ENCODE measurements at regions of chr18 and their contacts with region 1.

Region 1: GRCh38 chr18:72762515-72763122 is 105.2 kb downstream of the NETO1 start:
- DNase-seq: peak; percentile 21
- H3K4me3 ChIP-seq: no peak overlapping the region
- H3K27ac ChIP-seq: no peak overlapping the region
- H3K4me1 ChIP-seq: no peaks in the 10 kb centered on the region
- H3K27me3 ChIP-seq: no peaks in the 10 kb centered on the region
- CTCF ChIP-seq: peak; percentile 68 to 81 (median 73)
- POLR2A ChIP-seq: no peak

Region 2: GRCh38 chr18:72419914-72420313 is 342.7 kb before region 1 on chr18:
- intact Hi-C with region 1: no loop called
- DNase-seq: no peak
- H3K4me3 ChIP-seq: no peak overlapping the region
- H3K27ac ChIP-seq: no peak overlapping the region
- H3K4me1 ChIP-seq: no peaks in the 10 kb centered on the region
- H3K27me3 ChIP-seq: no peaks in the 10 kb centered on the region
- CTCF ChIP-seq: no peak
- POLR2A ChIP-seq: no peak

Region 3: GRCh38 chr18:73842795-73843394 is 1080.3 kb after region 1 on chr18:
- intact Hi-C with region 1: loop called (anchors 5 kb)
- DNase-seq: peak; percentile 35
- H3K4me3 ChIP-seq: no peak overlapping the region
- H3K27ac ChIP-seq: no peak overlapping the region
- H3K4me1 ChIP-seq: no peaks in the 10 kb centered on the region
- H3K27me3 ChIP-seq: no peaks in the 10 kb centered on the region
- CTCF ChIP-seq: peak; percentile 70 to 89 (median 78)
- POLR2A ChIP-seq: no peak

Region 4: DNA sequence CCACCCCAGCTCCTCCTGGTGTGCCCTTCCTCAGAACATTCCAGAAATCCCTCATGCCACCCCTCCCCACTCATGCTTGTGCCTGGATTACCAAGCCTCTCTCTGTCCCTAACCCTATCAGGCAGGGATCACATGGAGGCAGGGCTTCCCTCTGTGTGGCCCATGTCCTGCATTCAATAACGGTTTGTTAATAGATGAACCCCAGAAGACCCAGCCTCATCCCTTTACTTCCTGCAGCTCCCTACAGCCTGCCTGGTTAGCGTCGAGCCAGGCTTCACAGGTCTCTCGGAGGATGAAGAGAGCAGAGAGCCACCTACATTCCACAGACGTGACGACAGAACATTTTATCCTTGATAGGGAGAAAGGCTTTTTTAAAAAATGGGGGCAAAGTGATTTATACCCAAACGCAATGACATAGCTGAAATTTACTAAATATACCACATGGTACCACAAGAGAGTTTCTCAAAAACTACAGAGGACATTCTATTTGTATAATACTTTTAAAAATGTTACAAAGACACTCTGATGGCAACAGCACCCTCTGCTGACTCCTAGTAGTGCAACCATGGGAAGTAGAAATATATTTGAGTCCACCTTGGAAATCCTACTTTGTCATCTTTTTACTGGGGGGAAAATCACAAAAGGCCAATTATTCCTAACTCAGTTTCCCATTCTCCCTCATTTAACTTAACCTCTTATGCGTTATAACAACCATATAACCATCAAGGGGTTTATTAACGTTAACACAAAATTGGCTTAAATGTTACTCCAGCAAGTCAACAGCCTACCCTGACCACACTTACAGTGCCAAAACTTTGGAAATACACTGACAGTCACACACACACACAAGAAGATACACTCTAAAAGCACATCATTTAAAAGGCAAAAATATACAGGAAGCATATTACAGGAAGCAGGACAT is 1354.3 kb after region 1 on chr18:
- intact Hi-C with region 1: loop called (anchors 5 kb)
- DNase-seq: no peak
- H3K4me3 ChIP-seq: no peak overlapping the region
- H3K27ac ChIP-seq: no peak overlapping the region
- H3K4me1 ChIP-seq: no peaks in the 10 kb centered on the region
- H3K27me3 ChIP-seq: no peaks in the 10 kb centered on the region
- CTCF ChIP-seq: peak in 3 of 4 experiments; percentile 50 to 61 (median 59)
- POLR2A ChIP-seq: no peak